Activated naive CD4-positive, alpha-beta T cell treated with anti-CD3 and anti-CD28 coated beads for 36 hours (primary cell): ENCODE measurements at regions of chr13 and their contacts with region 1.

Region 1: DNA sequence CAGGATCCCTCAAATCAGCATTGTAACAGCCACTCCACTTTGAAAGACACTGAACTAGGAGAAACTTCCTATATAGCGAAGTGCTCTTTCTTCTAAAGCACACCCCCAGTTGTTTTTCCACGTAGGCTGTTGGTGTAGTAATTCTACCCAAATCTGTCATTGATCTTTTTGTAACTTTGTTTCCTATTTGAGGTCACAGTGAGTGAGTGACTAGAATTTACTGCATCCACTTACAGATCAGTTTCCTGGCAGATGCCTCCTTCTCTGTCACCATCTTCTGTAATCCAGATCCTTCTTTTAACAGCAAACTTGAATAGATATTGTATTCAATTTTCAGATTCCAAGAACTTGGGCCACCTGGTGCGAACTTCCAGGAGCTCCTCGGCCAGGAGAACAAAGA is 15.3 kb downstream of the ZAR1L start:
- DNase-seq: peak; percentile 10
- H3K4me3 Mint-ChIP-seq: no peak overlapping the region
- H3K27ac Mint-ChIP-seq: no peak overlapping the region
- H3K4me1 Mint-ChIP-seq: peaks cover 10% of the 10 kb centered on the region
- H3K27me3 Mint-ChIP-seq: peaks cover 16% of the 10 kb centered on the region

Region 2: GRCh38 chr13:32117701-32118100 is 182.2 kb before region 1 on chr13:
- CTCF ChIA-PET with region 1: no interaction called
- intact Hi-C with region 1: no loop called
- DNase-seq: no peak
- H3K4me3 Mint-ChIP-seq: no peak overlapping the region
- H3K27ac Mint-ChIP-seq: no peak overlapping the region
- H3K4me1 Mint-ChIP-seq: peaks cover 20% of the 10 kb centered on the region
- H3K27me3 Mint-ChIP-seq: no peaks in the 10 kb centered on the region

Region 3: GRCh38 chr13:32267836-32268439 is 32.0 kb before region 1 on chr13:
- CTCF ChIA-PET with region 1: interaction called, 4 read pairs
- intact Hi-C with region 1: loop called (anchors 1 kb)
- DNase-seq: peak; percentile 67
- H3K4me3 Mint-ChIP-seq: no peak overlapping the region
- H3K27ac Mint-ChIP-seq: no peak overlapping the region
- H3K4me1 Mint-ChIP-seq: peaks cover 5% of the 10 kb centered on the region
- H3K27me3 Mint-ChIP-seq: no peaks in the 10 kb centered on the region

Region 4: DNA sequence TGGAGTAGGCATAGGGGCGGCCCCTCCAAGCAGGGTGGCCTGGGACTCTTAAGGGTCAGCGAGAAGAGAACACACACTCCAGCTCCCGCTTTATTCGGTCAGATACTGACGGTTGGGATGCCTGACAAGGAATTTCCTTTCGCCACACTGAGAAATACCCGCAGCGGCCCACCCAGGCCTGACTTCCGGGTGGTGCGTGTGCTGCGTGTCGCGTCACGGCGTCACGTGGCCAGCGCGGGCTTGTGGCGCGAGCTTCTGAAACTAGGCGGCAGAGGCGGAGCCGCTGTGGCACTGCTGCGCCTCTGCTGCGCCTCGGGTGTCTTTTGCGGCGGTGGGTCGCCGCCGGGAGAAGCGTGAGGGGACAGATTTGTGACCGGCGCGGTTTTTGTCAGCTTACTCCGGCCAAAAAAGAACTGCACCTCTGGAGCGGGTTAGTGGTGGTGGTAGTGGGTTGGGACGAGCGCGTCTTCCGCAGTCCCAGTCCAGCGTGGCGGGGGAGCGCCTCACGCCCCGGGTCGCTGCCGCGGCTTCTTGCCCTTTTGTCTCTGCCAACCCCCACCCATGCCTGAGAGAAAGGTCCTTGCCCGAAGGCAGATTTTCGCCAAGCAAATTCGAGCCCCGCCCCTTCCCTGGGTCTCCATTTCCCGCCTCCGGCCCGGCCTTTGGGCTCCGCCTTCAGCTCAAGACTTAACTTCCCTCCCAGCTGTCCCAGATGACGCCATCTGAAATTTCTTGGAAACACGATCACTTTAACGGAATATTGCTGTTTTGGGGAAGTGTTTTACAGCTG is 15.5 kb after region 1 on chr13 and contains the starts of genes BRCA2 and ZAR1L:
- CTCF ChIA-PET with region 1: interaction called, 8 read pairs
- intact Hi-C with region 1: loop called (anchors 2 kb)
- DNase-seq: peak; percentile 91
- H3K4me3 Mint-ChIP-seq: peak within 1 kb of the TSS; percentile 92
- H3K27ac Mint-ChIP-seq: peak within 1 kb of the TSS; percentile 98
- H3K4me1 Mint-ChIP-seq: peaks cover 12% of the 10 kb centered on the region
- H3K27me3 Mint-ChIP-seq: no peaks in the 10 kb centered on the region
- total RNA-seq, gene BRCA2: 17.3 to 21.3 TPM
- total RNA-seq, gene ZAR1L: not detected